ENCODE measurements at regions of chr21 and their contacts with region 1.

Region 1: DNA sequence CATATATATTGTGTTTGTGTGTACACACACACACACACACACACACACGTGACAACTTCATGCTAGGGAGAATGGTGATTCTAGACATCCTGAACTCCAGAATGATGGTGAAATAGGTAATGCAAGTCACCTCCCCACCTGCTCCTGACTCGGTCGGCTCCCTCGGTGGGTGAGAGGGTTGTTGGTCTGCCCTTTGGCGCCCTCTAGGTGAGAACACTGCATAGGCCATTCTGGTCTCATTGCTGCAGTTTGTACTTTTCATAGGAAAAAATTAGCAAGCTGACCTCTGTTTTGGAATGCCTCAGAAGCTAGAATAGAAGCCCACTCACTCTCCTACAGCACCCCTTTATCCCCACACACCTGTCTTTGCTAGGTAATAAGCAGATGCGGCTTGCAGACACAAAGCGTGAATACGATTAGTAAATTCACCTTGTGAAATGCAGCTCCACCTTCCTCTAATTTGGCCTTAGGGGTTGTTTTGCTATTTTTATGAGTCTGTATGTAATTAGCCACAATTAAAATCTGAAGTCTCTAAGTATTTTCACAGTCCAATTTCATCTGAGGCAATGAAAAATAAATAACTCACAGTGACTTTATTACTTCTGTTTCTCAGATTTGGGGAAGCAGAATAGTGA is 130.0 kb upstream of the KCNJ15 start:
- DNase-seq: peak; percentile 80
- ATAC-seq: peak; percentile 76
- H3K4me3 Mint-ChIP-seq: no peak overlapping the region
- H3K27ac Mint-ChIP-seq: no peak overlapping the region
- H3K4me1 Mint-ChIP-seq: no peaks in the 10 kb centered on the region
- H3K27me3 Mint-ChIP-seq: peaks cover 11% of the 10 kb centered on the region

Region 2: DNA sequence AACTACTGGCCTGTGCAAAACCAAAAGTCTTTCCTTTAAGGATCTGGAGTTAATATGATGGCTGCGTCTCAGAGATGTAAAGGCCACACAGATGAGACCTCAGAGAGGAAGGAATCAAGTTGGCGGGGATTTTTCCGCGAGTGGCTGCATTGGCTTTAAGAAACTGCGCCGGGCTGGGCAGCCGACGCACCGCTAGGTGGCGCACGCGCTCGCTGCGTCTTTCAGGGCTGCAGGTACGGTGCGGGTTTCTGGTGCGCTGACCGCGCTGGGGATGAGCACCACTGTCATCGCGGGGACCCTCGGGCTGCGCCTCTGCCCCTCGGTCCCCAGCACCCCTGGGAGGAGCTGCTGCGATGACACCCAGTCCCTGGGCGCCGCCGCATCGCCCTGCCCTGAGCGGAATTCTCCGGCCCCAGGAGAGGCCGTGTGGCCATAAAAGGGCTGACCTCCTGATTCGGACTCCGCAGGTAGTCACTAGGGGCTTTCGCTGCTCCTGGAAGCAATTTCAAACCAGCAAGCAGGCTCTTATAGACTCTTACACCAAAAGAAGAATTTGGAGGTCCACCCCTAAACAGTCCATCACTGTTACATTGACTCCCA is 451.5 kb before region 1 on chr21:
- CTCF ChIA-PET with region 1: no interaction called
- POLR2A ChIA-PET with region 1: no interaction called
- intact Hi-C with region 1: loop called in 1 of 2 experiments (anchors 1 kb)
- DNase-seq: peak; percentile 81
- ATAC-seq: peak; percentile 74
- H3K4me3 Mint-ChIP-seq: no peak overlapping the region
- H3K27ac Mint-ChIP-seq: no peak overlapping the region
- H3K4me1 Mint-ChIP-seq: no peaks in the 10 kb centered on the region
- H3K27me3 Mint-ChIP-seq: peaks cover 18% of the 10 kb centered on the region

Region 3: GRCh38 chr21:37711836-37712568 is 414.8 kb before region 1 on chr21:
- CTCF ChIA-PET with region 1: interaction called, 17 read pairs
- POLR2A ChIA-PET with region 1: no interaction called
- intact Hi-C with region 1: loop called (anchors 1 to 2 kb)
- DNase-seq: peak; percentile 78
- ATAC-seq: peak; percentile 53
- H3K4me3 Mint-ChIP-seq: no peak overlapping the region
- H3K27ac Mint-ChIP-seq: no peak overlapping the region
- H3K4me1 Mint-ChIP-seq: no peaks in the 10 kb centered on the region
- H3K27me3 Mint-ChIP-seq: peaks cover 14% of the 10 kb centered on the region

Region 4: DNA sequence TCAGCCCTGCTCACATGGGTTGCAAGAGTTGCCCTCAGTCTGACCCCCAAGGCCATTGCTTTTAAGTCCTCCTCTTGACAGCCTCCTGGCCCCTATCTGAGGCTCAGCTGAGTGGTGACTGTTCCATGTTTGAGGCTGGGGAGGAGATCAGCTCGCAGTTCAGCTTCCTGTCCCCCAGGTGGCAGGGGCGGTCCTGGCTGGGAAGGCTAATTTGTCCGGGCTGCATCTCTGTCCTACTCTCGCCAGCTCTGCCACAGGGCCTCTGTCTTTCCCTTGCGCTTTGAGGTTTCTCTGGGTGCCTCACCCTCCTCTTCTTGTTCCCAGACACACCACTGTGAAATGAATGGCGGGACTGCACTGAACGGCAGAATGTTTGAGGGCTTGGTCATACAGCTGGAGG is 367.8 kb before region 1 on chr21:
- CTCF ChIA-PET with region 1: no interaction called
- POLR2A ChIA-PET with region 1: no interaction called
- intact Hi-C with region 1: loop called in 1 of 2 experiments (anchors 1 kb)
- DNase-seq: peak; percentile 52
- ATAC-seq: no peak
- H3K4me3 Mint-ChIP-seq: no peak overlapping the region
- H3K27ac Mint-ChIP-seq: no peak overlapping the region
- H3K4me1 Mint-ChIP-seq: no peaks in the 10 kb centered on the region
- H3K27me3 Mint-ChIP-seq: peaks cover 7% of the 10 kb centered on the region

Region 5: GRCh38 chr21:38544661-38545060 is 417.9 kb after region 1 on chr21:
- CTCF ChIA-PET with region 1: no interaction called
- POLR2A ChIA-PET with region 1: no interaction called
- intact Hi-C with region 1: no loop called
- DNase-seq: no peak
- ATAC-seq: no peak
- H3K4me3 Mint-ChIP-seq: no peak overlapping the region
- H3K27ac Mint-ChIP-seq: no peak overlapping the region
- H3K4me1 Mint-ChIP-seq: no peaks in the 10 kb centered on the region
- H3K27me3 Mint-ChIP-seq: peaks cover 2% of the 10 kb centered on the region

Measured in activated CD4-positive, alpha-beta T cell treated with anti-CD3 and anti-CD28 coated beads for 36 hours (primary cell).